ENCODE measurements at regions of chr2 and their contacts with region 1.

Region 1: GRCh38 chr2:233303252-233303651 is 4.4 kb upstream of the SAG start:
- DNase-seq: no peak
- H3K4me3 ChIP-seq: no peak overlapping the region
- H3K27ac ChIP-seq: no peak overlapping the region
- H3K4me1 ChIP-seq: no peaks in the 10 kb centered on the region
- H3K27me3 ChIP-seq: no peaks in the 10 kb centered on the region
- CTCF ChIP-seq: no peak

Region 2: GRCh38 chr2:232697100-232697865 is 606.0 kb before region 1 on chr2 and contains the start of gene GIGYF2:
- CTCF ChIA-PET with region 1: no interaction called
- POLR2A ChIA-PET with region 1: interaction called, 10 read pairs
- intact Hi-C with region 1: no loop called
- DNase-seq: peak; percentile 92 to 100
- H3K4me3 ChIP-seq: peak within 1 kb of the TSS; percentile 88
- H3K27ac ChIP-seq: peak within 1 kb of the TSS; percentile 79
- H3K4me1 ChIP-seq: peaks cover 33% of the 10 kb centered on the region
- H3K27me3 ChIP-seq: no peaks in the 10 kb centered on the region
- CTCF ChIP-seq: no peak
- total RNA-seq, gene GIGYF2: 86.4 and 101 TPM in 2 replicates

Measured in PC-9 (cell line).